ENCODE measurements at regions of chr1 and their contacts with region 1.

Region 1: GRCh38 chr1:68470388-68470970 is 20.7 kb upstream of the RPE65 start:
- DNase-seq: peak; percentile 3
- ATAC-seq: peak; percentile 41; the same call in 1 of the 3 replicates
- H3K4me3 ChIP-seq: no peak overlapping the region
- H3K27ac ChIP-seq: no peak overlapping the region
- H3K4me1 ChIP-seq: no peaks in the 10 kb centered on the region
- H3K27me3 ChIP-seq: no peaks in the 10 kb centered on the region
- CTCF ChIP-seq: peak; percentile 41
- EP300 ChIP-seq: no peak
- POLR2A ChIP-seq: no peak
- RAD21 ChIP-seq: no peak

Region 2: GRCh38 chr1:68600049-68600661 is 129.7 kb after region 1 on chr1:
- CTCF ChIA-PET with region 1: no interaction called
- POLR2A ChIA-PET with region 1: no interaction called
- in situ Hi-C with region 1: no loop called
- intact Hi-C with region 1: loop called (anchors 1 kb)
- DNase-seq: peak; percentile 3
- ATAC-seq: no peak; the same call in 1 of the 3 replicates
- H3K4me3 ChIP-seq: no peak overlapping the region
- H3K27ac ChIP-seq: no peak overlapping the region
- H3K4me1 ChIP-seq: no peaks in the 10 kb centered on the region
- H3K27me3 ChIP-seq: no peaks in the 10 kb centered on the region
- CTCF ChIP-seq: peak; percentile 46
- EP300 ChIP-seq: no peak
- POLR2A ChIP-seq: no peak
- RAD21 ChIP-seq: no peak

Measured in HepG2 (cell line).